Activated CD4-positive, alpha-beta T cell treated with anti-CD3 and anti-CD28 coated beads for 36 hours (primary cell): ENCODE measurements at regions of chr3 and their contacts with region 1.

Region 1: GRCh38 chr3:48188266-48189201 is at the start of gene CDC25A:
- DNase-seq: peak; percentile 98
- ATAC-seq: peak; percentile 99
- H3K4me3 Mint-ChIP-seq: peak within 1 kb of the TSS; percentile 96
- H3K27ac Mint-ChIP-seq: peak within 1 kb of the TSS; percentile 79
- H3K4me1 Mint-ChIP-seq: peaks cover 15% of the 10 kb centered on the region
- H3K27me3 Mint-ChIP-seq: peaks cover 7% of the 10 kb centered on the region
- total RNA-seq, gene CDC25A: 32.5 to 33.9 TPM

Region 2: GRCh38 chr3:47475570-47476329 is 712.8 kb before region 1 on chr3 and contains the start of gene SCAP:
- CTCF ChIA-PET with region 1: no interaction called
- POLR2A ChIA-PET with region 1: no interaction called
- intact Hi-C with region 1: loop called in 1 of 2 experiments (anchors 5 kb)
- DNase-seq: peak; percentile 98
- ATAC-seq: peak; percentile 95
- H3K4me3 Mint-ChIP-seq: peak within 1 kb of the TSS; percentile 89
- H3K27ac Mint-ChIP-seq: peak within 1 kb of the TSS; percentile 84
- H3K4me1 Mint-ChIP-seq: peaks cover 33% of the 10 kb centered on the region
- H3K27me3 Mint-ChIP-seq: no peaks in the 10 kb centered on the region
- total RNA-seq, gene SCAP: 44.5 to 51.2 TPM

Region 3: GRCh38 chr3:47802734-47803477 is 385.6 kb before region 1 on chr3 and contains the start of gene DHX30:
- CTCF ChIA-PET with region 1: no interaction called
- POLR2A ChIA-PET with region 1: no interaction called
- intact Hi-C with region 1: loop called in 1 of 2 experiments (anchors 1 kb)
- DNase-seq: peak; percentile 93
- ATAC-seq: peak; percentile 92
- H3K4me3 Mint-ChIP-seq: peak within 1 kb of the TSS; percentile 96
- H3K27ac Mint-ChIP-seq: peak within 1 kb of the TSS; percentile 98
- H3K4me1 Mint-ChIP-seq: peaks cover 24% of the 10 kb centered on the region
- H3K27me3 Mint-ChIP-seq: no peaks in the 10 kb centered on the region
- total RNA-seq, gene DHX30: 81.6 to 82.3 TPM

Region 4: GRCh38 chr3:48178072-48178471 is 10.5 kb before region 1 on chr3:
- CTCF ChIA-PET with region 1: no interaction called
- POLR2A ChIA-PET with region 1: no interaction called
- intact Hi-C with region 1: no loop called
- DNase-seq: no peak
- ATAC-seq: no peak
- H3K4me3 Mint-ChIP-seq: no peak overlapping the region
- H3K27ac Mint-ChIP-seq: no peak overlapping the region
- H3K4me1 Mint-ChIP-seq: no peaks in the 10 kb centered on the region
- H3K27me3 Mint-ChIP-seq: no peaks in the 10 kb centered on the region

Region 5: GRCh38 chr3:48215466-48215865 is 26.9 kb after region 1 on chr3:
- CTCF ChIA-PET with region 1: no interaction called
- POLR2A ChIA-PET with region 1: no interaction called
- intact Hi-C with region 1: no loop called
- DNase-seq: no peak
- ATAC-seq: no peak
- H3K4me3 Mint-ChIP-seq: no peak overlapping the region
- H3K27ac Mint-ChIP-seq: no peak overlapping the region
- H3K4me1 Mint-ChIP-seq: no peaks in the 10 kb centered on the region
- H3K27me3 Mint-ChIP-seq: no peaks in the 10 kb centered on the region

Region 6: GRCh38 chr3:48268381-48269183 is 80.0 kb after region 1 on chr3:
- CTCF ChIA-PET with region 1: interaction called, 4 read pairs
- POLR2A ChIA-PET with region 1: interaction called, 4 read pairs
- intact Hi-C with region 1: loop called in 1 of 2 experiments (anchors 1 kb)
- DNase-seq: peak; percentile 95
- ATAC-seq: peak; percentile 91
- H3K4me3 Mint-ChIP-seq: peak overlapping the region; percentile 57
- H3K27ac Mint-ChIP-seq: peak overlapping the region; percentile 92
- H3K4me1 Mint-ChIP-seq: peaks cover 39% of the 10 kb centered on the region
- H3K27me3 Mint-ChIP-seq: no peaks in the 10 kb centered on the region

Region 7: GRCh38 chr3:48472915-48473616 is 284.5 kb after region 1 on chr3:
- CTCF ChIA-PET with region 1: no interaction called
- POLR2A ChIA-PET with region 1: no interaction called
- intact Hi-C with region 1: loop called in 1 of 2 experiments (anchors 1 kb)
- DNase-seq: peak; percentile 99
- ATAC-seq: peak; percentile 90
- H3K4me3 Mint-ChIP-seq: peak overlapping the region; percentile 74
- H3K27ac Mint-ChIP-seq: peak overlapping the region; percentile 93
- H3K4me1 Mint-ChIP-seq: peaks cover 49% of the 10 kb centered on the region
- H3K27me3 Mint-ChIP-seq: no peaks in the 10 kb centered on the region

Region 8: GRCh38 chr3:48635222-48636021 is 446.9 kb after region 1 on chr3 and contains the start of gene SLC26A6:
- CTCF ChIA-PET with region 1: no interaction called
- POLR2A ChIA-PET with region 1: no interaction called
- intact Hi-C with region 1: loop called in 1 of 2 experiments (anchors 1 kb)
- DNase-seq: peak; percentile 97
- ATAC-seq: peak; percentile 97
- H3K4me3 Mint-ChIP-seq: peak within 1 kb of the TSS; percentile 84
- H3K27ac Mint-ChIP-seq: peak within 1 kb of the TSS; percentile 76
- H3K4me1 Mint-ChIP-seq: peaks cover 13% of the 10 kb centered on the region
- H3K27me3 Mint-ChIP-seq: no peaks in the 10 kb centered on the region
- total RNA-seq, gene SLC26A6: 35.0 to 38.5 TPM